ENCODE measurements at regions of chr18 and their contacts with region 1.

Region 1: DNA sequence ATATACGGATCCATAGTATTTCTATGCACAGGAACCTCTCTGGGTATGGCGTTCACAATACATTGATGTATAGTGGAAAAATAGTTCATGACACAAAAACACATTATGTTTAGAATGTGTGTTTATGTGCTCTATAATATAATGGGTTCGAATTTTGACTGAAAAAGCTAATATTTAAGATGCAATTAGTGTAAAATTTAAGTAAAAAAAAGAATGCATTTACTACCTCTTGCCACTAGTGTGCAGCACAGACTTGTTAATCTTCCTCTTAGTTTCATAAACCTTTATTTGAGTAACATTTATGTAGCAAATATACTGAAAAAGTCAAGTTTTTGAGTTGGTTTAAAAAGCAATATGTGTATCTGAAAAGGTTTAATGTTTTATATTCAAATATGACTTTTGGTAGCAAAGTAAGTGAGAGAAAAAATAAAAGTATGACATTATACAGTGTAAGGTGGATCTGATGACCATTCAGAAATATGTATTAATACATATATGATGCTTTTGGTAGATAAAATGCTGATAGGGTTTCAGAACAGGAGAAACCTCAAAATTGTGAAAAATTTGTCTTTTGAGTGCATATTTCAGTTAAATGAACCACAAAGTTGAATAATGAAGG is 49.4 kb downstream of the CCDC102B start:
- DNase-seq: no peak
- ATAC-seq: no peak
- H3K4me3 ChIP-seq: no peak overlapping the region
- H3K27ac ChIP-seq: no peak overlapping the region
- H3K4me1 ChIP-seq: no peaks in the 10 kb centered on the region
- H3K27me3 ChIP-seq: no peaks in the 10 kb centered on the region

Region 2: DNA sequence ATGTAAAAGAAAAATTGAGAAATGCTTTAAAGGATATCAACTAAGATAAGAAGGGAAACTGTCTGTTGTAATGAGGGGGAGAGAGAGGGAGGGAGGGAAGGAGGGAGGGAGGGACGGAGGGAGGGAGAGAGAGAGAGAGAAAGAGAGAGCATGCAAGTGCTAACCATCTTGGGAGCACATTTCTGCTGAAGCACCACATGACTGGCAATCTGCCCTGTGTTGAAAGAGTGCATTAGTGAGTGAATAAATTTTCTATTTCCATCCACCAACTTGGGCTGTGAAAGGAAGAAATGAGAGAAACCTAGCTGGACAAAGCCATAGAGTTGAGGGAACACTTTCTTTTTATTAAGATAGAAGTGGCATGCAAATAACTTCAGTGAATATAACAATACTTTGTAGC is 243.1 kb before region 1 on chr18:
- intact Hi-C with region 1: no loop called
- DNase-seq: no peak
- ATAC-seq: no peak
- H3K4me3 ChIP-seq: no peak overlapping the region
- H3K27ac ChIP-seq: no peak overlapping the region
- H3K4me1 ChIP-seq: peaks cover 0 to 3% of the 10 kb centered on the region in 2 donors
- H3K27me3 ChIP-seq: no peaks in the 10 kb centered on the region

Region 3: DNA sequence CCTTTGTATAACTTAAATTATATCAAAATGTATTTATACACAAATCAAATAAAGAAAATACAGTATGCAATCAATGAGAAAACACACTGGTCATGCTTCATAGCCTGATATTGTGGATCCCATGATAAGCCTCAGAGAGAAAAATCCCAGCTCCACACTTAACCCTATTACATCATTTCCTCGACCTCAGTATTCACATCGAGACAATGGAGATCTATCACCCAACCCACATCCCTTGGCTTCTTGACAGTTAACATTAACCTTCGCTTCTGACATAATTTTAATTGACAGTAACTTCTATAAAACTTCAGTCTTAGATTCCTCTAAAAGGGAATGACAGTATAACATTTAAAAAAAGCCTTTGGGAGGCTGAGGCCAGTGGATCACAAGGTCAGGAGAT is 144.0 kb before region 1 on chr18:
- intact Hi-C with region 1: no loop called
- DNase-seq: no peak
- ATAC-seq: no peak
- H3K4me3 ChIP-seq: no peak overlapping the region
- H3K27ac ChIP-seq: no peak overlapping the region
- H3K4me1 ChIP-seq: no peaks in the 10 kb centered on the region
- H3K27me3 ChIP-seq: no peaks in the 10 kb centered on the region

Region 4: GRCh38 chr18:70082430-70082829 is 1235.1 kb after region 1 on chr18:
- intact Hi-C with region 1: loop called in 1 of 2 experiments (anchors 10 kb)
- DNase-seq: no peak
- ATAC-seq: no peak
- H3K4me3 ChIP-seq: no peak overlapping the region
- H3K27ac ChIP-seq: no peak overlapping the region
- H3K4me1 ChIP-seq: no peaks in the 10 kb centered on the region
- H3K27me3 ChIP-seq: no peaks in the 10 kb centered on the region